ENCODE measurements at regions of chr2 and their contacts with region 1.

Region 1: GRCh38 chr2:206642075-206643025 is at the start of gene FAM237A:
- DNase-seq: peak; percentile 55
- ATAC-seq: peak; percentile 57
- total RNA-seq, gene FAM237A: not detected

Region 2: GRCh38 chr2:205967391-205968075 is 674.8 kb before region 1 on chr2:
- intact Hi-C with region 1: no loop called
- DNase-seq: no peak
- ATAC-seq: no peak

Region 3: DNA sequence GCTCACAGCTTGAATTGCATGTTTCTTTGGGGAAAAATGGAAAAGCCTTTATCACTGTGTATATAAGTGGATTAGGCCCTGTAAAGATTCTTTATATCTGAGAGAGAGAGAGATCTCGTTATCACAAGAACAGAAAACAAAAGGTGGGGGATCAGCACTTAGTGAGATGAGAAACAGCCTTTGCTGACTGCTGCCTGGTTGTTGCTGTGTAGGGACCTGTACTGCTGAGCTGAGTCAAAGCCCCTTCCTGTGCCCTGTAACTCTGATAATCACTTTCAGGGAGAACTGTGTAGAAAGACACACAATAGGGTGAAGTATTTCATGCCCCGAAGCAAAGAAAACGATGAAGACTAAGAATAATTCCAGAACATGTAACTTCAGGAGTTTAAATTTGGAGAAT is 30.6 kb before region 1 on chr2:
- intact Hi-C with region 1: loop called (anchors 1 kb)
- DNase-seq: no peak
- ATAC-seq: no peak

Measured in sciatic nerve (tissue), 2 donors.